ENCODE measurements at regions of chr9 and their contacts with region 1.

Region 1: GRCh38 chr9:13688994-13689600 is 409.6 kb upstream of the MPDZ start:
- DNase-seq: no peak
- ATAC-seq: no peak
- H3K4me3 ChIP-seq: no peak overlapping the region
- H3K27ac ChIP-seq: no peak overlapping the region
- H3K4me1 ChIP-seq: no peaks in the 10 kb centered on the region
- H3K27me3 ChIP-seq: no peaks in the 10 kb centered on the region
- CTCF ChIP-seq: peak; percentile 14; the same call in 1 of the 2 replicates

Region 2: DNA sequence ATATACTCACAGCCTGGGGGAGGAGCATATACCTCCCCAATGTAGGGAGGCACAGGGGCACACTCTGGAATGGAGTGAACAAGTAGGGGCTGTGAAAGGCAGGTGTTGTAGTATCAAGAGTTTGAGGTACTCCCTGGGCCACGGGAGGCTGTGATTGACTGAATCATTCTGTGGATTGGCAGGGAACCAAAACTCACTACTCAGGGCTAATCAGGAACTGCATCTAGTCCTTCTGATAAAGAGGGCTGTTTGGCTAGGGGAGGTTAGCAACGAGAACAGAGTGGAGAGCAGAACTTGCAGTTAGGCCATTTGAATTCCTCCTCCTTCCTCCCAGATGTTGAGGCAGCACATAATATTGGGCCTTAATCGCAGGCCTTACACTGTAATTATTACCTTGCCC is 40.4 kb before region 1 on chr9:
- CTCF ChIA-PET with region 1: no interaction called
- POLR2A ChIA-PET with region 1: no interaction called
- in situ Hi-C with region 1: no loop called
- intact Hi-C with region 1: no loop called
- DNase-seq: no peak
- ATAC-seq: no peak
- H3K4me3 ChIP-seq: no peak overlapping the region
- H3K27ac ChIP-seq: no peak overlapping the region
- H3K4me1 ChIP-seq: no peaks in the 10 kb centered on the region
- H3K27me3 ChIP-seq: no peaks in the 10 kb centered on the region
- CTCF ChIP-seq: no peak

Region 3: DNA sequence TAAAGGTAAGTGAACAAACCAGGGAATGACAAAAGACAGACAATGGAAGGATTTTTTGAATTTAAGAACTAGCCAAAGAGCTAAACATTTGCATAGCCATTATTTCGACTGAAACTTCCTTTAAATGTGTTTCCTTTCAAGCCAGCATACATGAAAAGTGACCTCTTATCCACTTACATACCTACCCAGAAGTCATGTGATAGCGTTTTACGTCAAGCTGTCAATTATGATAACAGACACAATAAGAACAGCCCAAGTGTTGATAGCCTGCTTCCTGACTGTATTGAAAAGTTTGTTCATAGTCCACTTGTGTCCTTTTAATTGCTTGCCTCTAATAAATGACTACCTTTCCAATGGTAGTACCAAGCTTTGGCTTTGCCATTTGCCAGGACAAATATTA is 418.9 kb after region 1 on chr9:
- CTCF ChIA-PET with region 1: no interaction called
- POLR2A ChIA-PET with region 1: no interaction called
- in situ Hi-C with region 1: no loop called
- intact Hi-C with region 1: loop called (anchors 10 kb)
- DNase-seq: no peak
- ATAC-seq: no peak
- H3K4me3 ChIP-seq: no peak overlapping the region
- H3K27ac ChIP-seq: no peak overlapping the region
- H3K4me1 ChIP-seq: no peaks in the 10 kb centered on the region
- H3K27me3 ChIP-seq: no peaks in the 10 kb centered on the region
- CTCF ChIP-seq: no peak

Measured in Panc1 (cell line).